OCI-LY7 (cell line): ENCODE measurements at regions of chr2 and their contacts with region 1.

Region 1: DNA sequence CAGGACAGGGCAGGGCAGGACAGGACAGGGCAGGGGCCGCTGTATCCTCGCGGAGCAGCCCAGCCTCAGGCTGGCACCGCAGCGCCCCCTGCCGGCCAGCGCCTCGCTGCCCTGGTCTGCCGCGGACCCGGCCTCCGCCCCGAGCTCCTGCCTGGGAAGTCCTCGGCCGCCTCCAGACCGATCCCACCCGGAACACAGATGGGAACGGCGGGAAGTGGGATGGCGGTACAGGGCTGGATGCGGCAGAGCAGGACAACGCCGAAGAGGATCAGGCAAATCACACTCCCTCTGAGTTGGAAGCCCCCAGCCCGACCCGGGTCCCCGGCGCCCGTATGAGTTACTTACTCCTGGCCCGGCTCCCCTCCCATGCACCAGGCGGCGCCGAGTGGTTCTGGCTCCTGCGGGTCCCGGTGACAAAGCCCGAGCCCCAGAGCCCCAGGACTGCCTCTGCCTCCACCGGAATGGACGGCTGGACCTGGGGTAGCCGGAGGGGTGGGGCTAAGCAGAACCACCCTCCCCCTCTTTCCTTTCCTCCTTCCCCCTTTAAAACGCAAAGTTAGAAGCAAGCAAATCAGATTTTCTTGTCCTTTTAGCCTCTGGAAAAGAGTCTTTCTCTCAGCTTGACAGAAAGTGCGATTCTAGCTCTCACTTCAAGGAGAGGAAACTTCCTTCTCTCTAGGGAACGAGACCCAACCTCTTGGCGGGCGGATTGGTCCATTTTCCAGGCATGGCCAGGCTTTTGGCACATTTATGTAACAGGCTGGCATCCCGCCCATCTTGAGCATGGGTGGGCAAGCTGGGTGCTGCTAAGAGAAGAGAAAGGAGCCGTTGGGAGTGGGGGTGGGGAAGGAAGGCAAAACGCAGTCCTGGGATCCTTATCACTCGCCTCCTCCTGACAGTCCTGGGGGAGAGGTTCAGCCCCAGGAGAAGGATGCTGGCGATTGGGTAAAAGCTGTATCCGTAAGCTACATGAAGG is at the start of gene TP53I3:
- DNase-seq: peak; percentile 75
- H3K4me3 ChIP-seq: peak within 1 kb of the TSS; percentile 67
- H3K27ac ChIP-seq: peak within 1 kb of the TSS; percentile 31
- H3K4me1 ChIP-seq: peaks cover 15% of the 10 kb centered on the region
- CTCF ChIP-seq: peak; percentile 89
- total RNA-seq, gene TP53I3: 0.36 and 0.38 TPM in 2 replicates

Region 2: GRCh38 chr2:23824777-23825212 is 259.9 kb before region 1 on chr2:
- CTCF ChIA-PET with region 1: no interaction called
- POLR2A ChIA-PET with region 1: interaction called, 5 read pairs
- intact Hi-C with region 1: loop called (anchors 2 kb)
- DNase-seq: peak; percentile 73
- H3K4me3 ChIP-seq: no peak overlapping the region
- H3K27ac ChIP-seq: no peak overlapping the region
- H3K4me1 ChIP-seq: peaks cover 7% of the 10 kb centered on the region
- CTCF ChIP-seq: peak; percentile 93

Region 3: GRCh38 chr2:23988371-23988770 is 96.3 kb before region 1 on chr2:
- CTCF ChIA-PET with region 1: no interaction called
- POLR2A ChIA-PET with region 1: no interaction called
- intact Hi-C with region 1: loop called (anchors 2 kb)
- DNase-seq: peak; percentile 38
- H3K4me3 ChIP-seq: no peak overlapping the region
- H3K27ac ChIP-seq: no peak overlapping the region
- H3K4me1 ChIP-seq: no peaks in the 10 kb centered on the region
- CTCF ChIP-seq: peak; percentile 74

Region 4: GRCh38 chr2:24021193-24021998 is 63.3 kb before region 1 on chr2:
- CTCF ChIA-PET with region 1: no interaction called
- POLR2A ChIA-PET with region 1: no interaction called
- intact Hi-C with region 1: loop called (anchors 2 kb)
- DNase-seq: peak; percentile 44
- H3K4me3 ChIP-seq: no peak overlapping the region
- H3K27ac ChIP-seq: no peak overlapping the region
- H3K4me1 ChIP-seq: no peaks in the 10 kb centered on the region
- CTCF ChIP-seq: peak; percentile 68

Region 5: GRCh38 chr2:24382363-24383073 is 297.8 kb after region 1 on chr2:
- CTCF ChIA-PET with region 1: no interaction called
- POLR2A ChIA-PET with region 1: no interaction called
- intact Hi-C with region 1: loop called (anchors 2 kb)
- DNase-seq: peak; percentile 79
- H3K4me3 ChIP-seq: no peak overlapping the region
- H3K27ac ChIP-seq: no peak overlapping the region
- H3K4me1 ChIP-seq: peaks cover 5% of the 10 kb centered on the region
- CTCF ChIP-seq: peak; percentile 71